ENCODE measurements at regions of chr11 and their contacts with region 1.

Region 1: DNA sequence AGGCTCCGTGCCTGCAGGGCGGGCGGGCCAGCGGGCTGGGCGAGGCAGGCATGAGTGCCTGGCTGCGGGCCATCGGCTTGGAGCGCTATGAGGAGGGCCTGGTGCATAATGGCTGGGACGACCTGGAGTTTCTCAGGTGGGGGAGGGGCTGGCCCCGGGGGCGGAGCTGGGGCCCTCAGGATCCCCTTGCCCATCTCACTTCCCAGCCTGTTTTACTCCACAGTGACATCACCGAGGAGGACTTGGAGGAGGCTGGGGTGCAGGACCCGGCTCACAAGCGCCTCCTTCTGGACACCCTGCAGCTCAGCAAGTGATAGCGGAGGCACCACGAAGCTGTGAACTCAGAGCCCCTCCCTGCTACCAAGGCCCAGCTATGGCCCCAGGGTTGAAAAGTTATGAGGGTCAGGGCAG is 5.9 kb downstream of the PHOX2A start:
- DNase-seq: peak; percentile 85
- CTCF ChIP-seq: peak; percentile 79

Region 2: DNA sequence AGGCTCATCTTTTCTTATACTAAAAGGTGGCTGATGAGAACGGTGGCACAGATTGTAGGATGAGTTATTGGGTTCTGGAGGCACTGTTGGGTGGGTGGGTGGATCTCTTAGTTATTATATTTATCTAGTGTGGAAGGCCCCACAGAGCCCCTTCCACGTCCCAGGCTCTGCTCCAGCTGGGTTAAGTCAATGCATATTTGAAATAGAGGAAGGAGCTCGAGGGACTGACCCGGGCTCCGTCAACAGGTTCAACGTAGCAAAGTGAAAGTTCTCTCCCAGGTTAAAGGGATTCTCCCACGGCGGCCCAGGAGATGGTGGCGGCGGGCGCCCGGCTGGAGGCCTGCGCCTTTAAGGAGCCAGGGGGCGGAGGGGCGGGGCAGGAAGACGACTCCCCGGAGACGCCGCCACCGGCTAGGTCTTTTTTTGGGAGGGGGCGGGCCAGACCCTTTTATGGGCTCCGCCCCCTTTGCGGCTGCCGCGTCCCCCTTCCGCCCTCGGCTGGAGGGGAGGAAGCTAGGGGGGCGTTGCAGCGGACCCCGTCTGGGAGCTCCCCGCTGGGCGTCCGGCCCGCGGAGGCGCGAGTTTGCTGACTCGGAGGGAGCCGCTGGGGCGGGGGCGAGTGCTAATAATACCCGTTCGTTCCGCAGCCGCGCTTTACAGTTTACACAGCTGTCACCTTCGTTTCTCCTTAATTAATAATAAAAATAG is 15.0 kb before region 1 on chr11:
- CTCF ChIA-PET with region 1: interaction called, 36 read pairs
- POLR2A ChIA-PET with region 1: interaction called, 3 read pairs
- DNase-seq: peak; percentile 93
- CTCF ChIP-seq: no peak

Region 3: GRCh38 chr11:72254299-72254993 is 16.4 kb after region 1 on chr11:
- CTCF ChIA-PET with region 1: interaction called, 13 read pairs
- POLR2A ChIA-PET with region 1: no interaction called
- DNase-seq: no peak
- CTCF ChIP-seq: no peak

Region 4: GRCh38 chr11:72585762-72586311 is 347.8 kb after region 1 on chr11:
- CTCF ChIA-PET with region 1: no interaction called
- POLR2A ChIA-PET with region 1: no interaction called
- DNase-seq: peak; percentile 85
- CTCF ChIP-seq: peak; percentile 82

Region 5: DNA sequence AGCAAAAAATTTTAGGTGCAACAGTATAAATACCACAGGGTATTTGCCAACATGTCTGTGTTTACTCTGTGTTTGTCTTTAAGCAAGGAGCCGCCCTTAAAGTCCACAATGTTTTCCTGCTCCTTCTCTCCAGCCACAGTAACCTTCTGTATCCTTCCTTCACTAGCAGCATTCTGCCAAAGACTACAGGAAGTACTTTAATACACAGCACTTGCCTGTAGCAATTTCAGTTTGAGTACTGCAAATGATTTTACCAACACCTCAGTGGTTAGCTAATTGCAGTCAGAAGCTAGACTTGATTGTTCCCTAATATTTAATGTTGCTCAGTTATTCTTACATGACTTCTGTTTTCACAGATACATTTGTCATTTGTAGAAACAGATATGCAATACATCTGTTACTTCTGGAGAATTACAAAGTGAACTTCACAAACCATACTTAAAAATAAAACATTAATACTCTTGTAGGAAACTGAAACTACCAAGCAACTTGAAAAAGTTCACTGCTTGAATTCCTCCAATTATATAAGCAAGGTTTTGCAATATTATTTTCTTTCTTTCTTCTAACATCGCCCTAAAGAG is 834.9 kb after region 1 on chr11:
- CTCF ChIA-PET with region 1: no interaction called
- POLR2A ChIA-PET with region 1: no interaction called
- DNase-seq: peak; percentile 38
- CTCF ChIP-seq: no peak